Activated CD4-positive, alpha-beta memory T cell treated with anti-CD3 and anti-CD28 coated beads, Interleukin-2, amount 10 ng/mL, durations not matched to agents 7 days and 5 days (primary cell): ENCODE measurements at regions of chr1 and their contacts with region 1.

Region 1: GRCh38 chr1:24150234-24151174 is 7.6 kb upstream of the IL22RA1 start:
- DNase-seq: peak; percentile 90
- H3K4me3 Mint-ChIP-seq: peak overlapping the region; percentile 48
- H3K27ac Mint-ChIP-seq: no peak overlapping the region
- H3K4me1 Mint-ChIP-seq: peaks cover 25% of the 10 kb centered on the region
- H3K27me3 Mint-ChIP-seq: peaks cover 33% of the 10 kb centered on the region

Region 2: DNA sequence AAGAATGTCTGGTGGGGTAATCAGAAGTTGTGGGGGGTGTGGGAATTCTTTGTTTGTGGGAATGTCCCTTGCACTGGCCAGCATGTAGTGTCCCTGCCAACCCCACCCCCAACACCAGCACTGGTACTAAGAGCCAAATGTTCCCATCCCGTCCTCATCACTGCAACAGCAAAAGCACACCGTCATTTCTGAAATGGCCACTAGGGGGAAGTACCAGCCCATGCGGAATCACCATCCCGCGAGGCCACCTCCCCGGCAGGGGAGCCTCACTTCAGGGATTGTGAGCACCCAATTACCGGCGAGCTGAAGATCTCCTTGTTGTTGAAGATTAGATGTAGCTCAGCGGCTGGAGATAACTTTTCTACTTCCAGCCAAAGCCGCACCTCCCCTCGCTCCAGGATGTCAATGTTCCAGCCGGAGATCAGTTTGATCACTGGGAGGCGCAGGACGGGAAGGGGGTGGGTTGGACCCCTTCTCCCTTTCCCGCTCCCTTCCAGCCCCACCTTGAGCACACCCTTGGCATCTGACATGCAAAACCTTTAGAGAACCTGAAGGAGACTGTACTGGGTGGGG is 79.6 kb before region 1 on chr1:
- CTCF ChIA-PET with region 1: interaction called, 11 read pairs
- POLR2A ChIA-PET with region 1: no interaction called
- DNase-seq: peak; percentile 78
- H3K4me3 Mint-ChIP-seq: no peak overlapping the region
- H3K27ac Mint-ChIP-seq: no peak overlapping the region
- H3K4me1 Mint-ChIP-seq: peaks cover 4% of the 10 kb centered on the region
- H3K27me3 Mint-ChIP-seq: peaks cover 13% of the 10 kb centered on the region

Region 3: DNA sequence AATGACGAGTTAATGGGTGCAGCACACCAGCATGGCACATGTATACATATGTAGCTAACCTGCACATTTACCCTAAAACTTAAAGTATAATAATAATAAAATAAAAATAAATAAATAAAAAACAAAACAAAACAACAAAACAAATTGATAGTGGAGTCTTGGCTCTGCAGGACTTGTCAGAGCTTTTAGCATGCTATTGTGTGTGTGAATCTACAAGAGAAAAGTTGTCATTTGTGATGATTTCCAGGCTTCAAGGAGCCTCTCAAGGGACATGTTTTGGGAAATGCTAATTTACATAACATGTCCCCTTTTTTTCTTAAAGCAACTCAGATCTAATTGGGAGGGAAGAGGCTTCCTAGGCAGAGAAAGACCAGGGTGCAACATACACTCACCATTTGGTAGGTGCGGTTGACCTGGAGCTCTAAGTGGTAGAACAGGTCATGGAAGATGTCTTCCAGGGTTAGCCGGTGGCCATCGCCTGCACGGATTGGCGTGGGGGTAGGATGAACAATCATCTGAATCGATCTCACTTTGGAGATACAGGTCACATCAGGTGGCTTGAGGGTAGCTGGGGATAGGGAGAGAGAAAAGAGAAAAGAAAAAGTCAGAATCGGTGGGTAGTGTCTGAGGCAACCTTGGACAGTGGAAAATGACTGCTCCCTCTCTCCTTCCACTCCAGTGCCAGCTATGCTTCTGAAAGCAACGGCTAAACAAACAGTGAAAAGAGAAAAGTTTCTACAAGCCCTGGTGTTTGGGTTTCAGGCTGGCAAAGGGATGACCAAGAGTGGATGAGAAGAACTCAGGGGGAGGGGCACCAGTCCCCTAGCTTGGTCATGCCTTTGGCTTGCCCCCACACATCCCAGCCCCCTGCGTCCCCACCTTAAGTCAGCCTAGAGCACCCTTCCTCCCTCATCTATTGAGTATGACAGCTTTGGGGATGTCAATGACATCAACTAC is 16.4 kb before region 1 on chr1:
- CTCF ChIA-PET with region 1: interaction called, 22 read pairs
- POLR2A ChIA-PET with region 1: no interaction called
- DNase-seq: no peak
- H3K4me3 Mint-ChIP-seq: no peak overlapping the region
- H3K27ac Mint-ChIP-seq: no peak overlapping the region
- H3K4me1 Mint-ChIP-seq: peaks cover 5% of the 10 kb centered on the region
- H3K27me3 Mint-ChIP-seq: peaks cover 14% of the 10 kb centered on the region

Region 4: GRCh38 chr1:24186993-24187805 is 36.7 kb after region 1 on chr1 and contains the start of gene IFNLR1:
- CTCF ChIA-PET with region 1: interaction called, 29 read pairs
- POLR2A ChIA-PET with region 1: interaction called, 22 read pairs
- DNase-seq: peak; percentile 79
- H3K4me3 Mint-ChIP-seq: peak within 1 kb of the TSS; percentile 79
- H3K27ac Mint-ChIP-seq: peak within 1 kb of the TSS; percentile 38
- H3K4me1 Mint-ChIP-seq: peaks cover 50% of the 10 kb centered on the region
- H3K27me3 Mint-ChIP-seq: peaks cover 2% of the 10 kb centered on the region
- total RNA-seq, gene IFNLR1: 6.0 to 6.1 TPM

Region 5: DNA sequence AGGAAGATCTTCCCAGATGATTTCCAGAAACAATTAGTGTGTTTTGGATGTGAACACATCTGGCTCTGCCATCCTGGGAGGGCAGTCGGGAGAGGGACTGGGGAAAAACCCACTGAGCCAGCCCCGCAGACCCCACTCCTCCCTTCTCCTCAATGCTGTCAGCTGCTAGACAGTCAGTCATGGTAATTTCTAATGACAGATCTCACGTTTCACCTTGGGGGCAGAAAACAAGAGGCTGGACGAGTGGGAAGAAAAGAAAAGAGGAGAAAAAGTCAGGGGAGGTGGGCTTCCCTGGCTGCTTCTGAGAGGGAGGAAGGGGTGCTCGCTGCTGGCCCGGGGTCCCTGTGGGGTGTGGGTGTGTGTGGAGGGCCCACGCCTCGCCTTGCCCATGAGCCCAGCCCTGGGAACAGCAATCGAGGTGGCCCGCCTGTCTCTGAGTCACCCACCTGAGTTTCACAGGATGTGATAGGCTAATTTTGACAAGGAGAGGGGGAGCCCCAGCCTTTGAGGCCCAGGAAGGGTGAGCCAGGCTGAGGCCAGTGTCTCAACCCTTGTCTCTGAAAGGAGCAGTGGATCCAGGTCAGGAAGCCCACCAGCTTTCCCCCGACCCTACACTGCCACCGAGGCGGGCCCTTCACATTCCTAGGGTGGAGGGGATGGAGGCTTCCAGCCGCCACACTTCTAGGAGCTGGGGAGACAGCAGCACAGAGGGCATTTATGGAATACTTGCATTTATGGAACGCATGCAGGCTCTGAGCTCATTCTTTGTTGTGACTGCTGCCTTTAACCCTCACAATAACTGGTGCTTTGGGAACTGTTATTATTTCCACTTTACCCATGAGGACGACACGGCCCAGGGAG is 85.6 kb after region 1 on chr1:
- CTCF ChIA-PET with region 1: no interaction called
- POLR2A ChIA-PET with region 1: no interaction called
- DNase-seq: peak; percentile 22
- H3K4me3 Mint-ChIP-seq: no peak overlapping the region
- H3K27ac Mint-ChIP-seq: no peak overlapping the region
- H3K4me1 Mint-ChIP-seq: peaks cover 11% of the 10 kb centered on the region
- H3K27me3 Mint-ChIP-seq: peaks cover 25% of the 10 kb centered on the region

Region 6: GRCh38 chr1:24385160-24385940 is 234.8 kb after region 1 on chr1:
- CTCF ChIA-PET with region 1: interaction called, 94 read pairs
- POLR2A ChIA-PET with region 1: interaction called, 5 read pairs
- DNase-seq: peak; percentile 49
- H3K4me3 Mint-ChIP-seq: no peak overlapping the region
- H3K27ac Mint-ChIP-seq: peak overlapping the region; percentile 82
- H3K4me1 Mint-ChIP-seq: peaks cover 36% of the 10 kb centered on the region
- H3K27me3 Mint-ChIP-seq: no peaks in the 10 kb centered on the region